PC-9 (cell line): ENCODE measurements at regions of chr15 and their contacts with region 1.

Region 1: DNA sequence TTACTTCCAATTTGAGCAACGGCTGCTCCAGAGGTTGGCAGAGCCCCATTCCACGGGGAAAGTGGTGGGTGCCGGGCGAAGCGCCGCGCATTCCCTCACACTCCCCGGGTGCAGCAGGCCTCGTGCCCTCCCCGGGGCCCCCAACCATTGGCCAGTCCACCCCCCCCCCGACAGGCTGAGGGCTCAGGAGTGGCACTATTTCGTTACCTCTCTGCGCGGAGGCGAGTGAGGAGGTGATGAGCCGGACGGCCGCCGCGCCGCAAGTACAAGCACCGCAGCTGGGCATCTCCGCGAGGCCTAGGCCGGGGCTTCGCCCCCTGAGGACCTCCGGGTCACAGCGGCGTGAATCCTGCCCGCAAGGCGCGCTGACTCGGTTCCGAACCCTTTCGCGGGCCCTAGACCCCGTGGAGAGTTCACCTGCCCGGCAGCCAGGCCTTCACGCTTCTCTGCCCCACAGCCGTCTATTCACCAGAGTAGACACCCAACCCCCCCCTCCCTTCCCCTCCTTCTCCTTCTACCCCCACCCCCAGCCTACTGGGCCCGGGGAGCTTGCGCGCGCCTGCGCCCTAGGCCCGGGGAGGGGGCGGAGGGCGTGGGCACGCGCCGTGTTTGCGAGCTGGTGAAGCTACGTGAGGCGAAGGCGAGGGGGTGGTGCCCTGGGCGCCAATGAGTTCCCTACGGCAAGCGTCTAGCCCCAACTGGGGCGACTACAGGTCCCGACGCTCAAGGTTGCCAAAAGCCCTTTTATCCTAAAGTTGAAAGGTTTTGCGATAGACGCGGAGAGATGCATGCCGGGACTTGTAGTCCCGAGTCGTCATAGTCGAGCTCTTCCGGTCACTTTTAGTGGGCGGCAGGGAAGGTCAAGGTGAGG is at the start of gene CLPX:
- DNase-seq: peak; percentile 85 to 89
- H3K4me3 ChIP-seq: peak within 1 kb of the TSS; percentile 96
- H3K27ac ChIP-seq: peak within 1 kb of the TSS; percentile 69
- H3K4me1 ChIP-seq: no peaks in the 10 kb centered on the region
- H3K27me3 ChIP-seq: no peaks in the 10 kb centered on the region
- CTCF ChIP-seq: no peak
- total RNA-seq, gene CLPX: 41.0 and 44.1 TPM in 2 replicates

Region 2: DNA sequence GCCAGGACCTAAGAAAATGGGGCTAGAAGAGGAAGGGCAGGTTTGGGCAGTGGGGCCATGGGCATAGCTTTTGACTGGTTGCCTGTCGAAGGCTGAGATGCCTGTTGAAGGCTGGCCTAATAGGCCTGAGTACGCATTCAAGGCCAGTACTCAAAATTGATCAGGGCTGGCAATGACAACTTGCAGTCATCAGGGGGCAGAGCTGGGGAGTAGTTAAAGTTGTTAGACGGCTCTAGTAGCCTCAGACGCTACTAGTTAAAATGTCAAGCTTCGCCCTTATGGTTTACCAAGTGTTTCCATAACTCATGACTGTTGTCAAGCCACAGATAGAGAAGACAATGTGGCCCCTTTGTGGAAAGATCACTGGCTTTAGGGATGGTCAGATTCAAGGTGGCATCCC is 224.1 kb before region 1 on chr15:
- CTCF ChIA-PET with region 1: no interaction called
- POLR2A ChIA-PET with region 1: interaction called, 11 read pairs
- intact Hi-C with region 1: no loop called
- DNase-seq: no peak
- H3K4me3 ChIP-seq: no peak overlapping the region
- H3K27ac ChIP-seq: no peak overlapping the region
- H3K4me1 ChIP-seq: no peaks in the 10 kb centered on the region
- H3K27me3 ChIP-seq: no peaks in the 10 kb centered on the region
- CTCF ChIP-seq: no peak

Region 3: GRCh38 chr15:65134538-65134937 is 50.6 kb before region 1 on chr15:
- CTCF ChIA-PET with region 1: no interaction called
- POLR2A ChIA-PET with region 1: interaction called, 10 read pairs
- intact Hi-C with region 1: no loop called
- DNase-seq: no peak
- H3K4me3 ChIP-seq: peak overlapping the region; percentile 78
- H3K27ac ChIP-seq: no peak overlapping the region
- H3K4me1 ChIP-seq: 0 out of 2 replicates have a peak, but pooled peaks cover 5% of the 10 kb centered on the region
- H3K27me3 ChIP-seq: no peaks in the 10 kb centered on the region
- CTCF ChIP-seq: no peak

Region 4: GRCh38 chr15:65258375-65259262 is 73.5 kb after region 1 on chr15:
- CTCF ChIA-PET with region 1: no interaction called
- POLR2A ChIA-PET with region 1: no interaction called
- intact Hi-C with region 1: no loop called
- DNase-seq: no peak
- H3K4me3 ChIP-seq: no peak overlapping the region
- H3K27ac ChIP-seq: no peak overlapping the region
- H3K4me1 ChIP-seq: no peaks in the 10 kb centered on the region
- H3K27me3 ChIP-seq: no peaks in the 10 kb centered on the region
- CTCF ChIP-seq: no peak

Region 5: DNA sequence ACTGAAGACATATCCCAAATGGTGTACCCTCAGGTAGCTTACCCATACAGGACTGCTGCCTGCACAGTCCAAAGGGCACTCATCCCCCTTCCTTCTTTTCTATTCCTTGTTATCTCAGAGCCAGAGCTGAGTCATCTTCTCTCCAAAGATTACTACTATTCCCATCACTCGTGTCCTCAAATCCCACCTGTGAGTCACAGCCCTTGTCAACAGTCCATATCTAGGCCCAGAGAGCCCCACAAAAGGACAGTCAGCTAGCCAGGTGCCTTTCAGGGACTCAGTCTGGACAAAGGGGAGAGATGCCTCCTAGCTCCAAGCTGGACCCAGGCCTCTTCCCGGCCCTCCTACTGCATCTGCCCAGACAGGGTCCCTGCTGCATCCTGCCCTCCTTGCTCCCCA is 90.6 kb after region 1 on chr15:
- CTCF ChIA-PET with region 1: no interaction called
- POLR2A ChIA-PET with region 1: interaction called, 8 read pairs
- intact Hi-C with region 1: loop called (anchors 1 kb)
- DNase-seq: no peak
- H3K4me3 ChIP-seq: no peak overlapping the region
- H3K27ac ChIP-seq: no peak overlapping the region
- H3K4me1 ChIP-seq: no peaks in the 10 kb centered on the region
- H3K27me3 ChIP-seq: no peaks in the 10 kb centered on the region
- CTCF ChIP-seq: no peak

Region 6: DNA sequence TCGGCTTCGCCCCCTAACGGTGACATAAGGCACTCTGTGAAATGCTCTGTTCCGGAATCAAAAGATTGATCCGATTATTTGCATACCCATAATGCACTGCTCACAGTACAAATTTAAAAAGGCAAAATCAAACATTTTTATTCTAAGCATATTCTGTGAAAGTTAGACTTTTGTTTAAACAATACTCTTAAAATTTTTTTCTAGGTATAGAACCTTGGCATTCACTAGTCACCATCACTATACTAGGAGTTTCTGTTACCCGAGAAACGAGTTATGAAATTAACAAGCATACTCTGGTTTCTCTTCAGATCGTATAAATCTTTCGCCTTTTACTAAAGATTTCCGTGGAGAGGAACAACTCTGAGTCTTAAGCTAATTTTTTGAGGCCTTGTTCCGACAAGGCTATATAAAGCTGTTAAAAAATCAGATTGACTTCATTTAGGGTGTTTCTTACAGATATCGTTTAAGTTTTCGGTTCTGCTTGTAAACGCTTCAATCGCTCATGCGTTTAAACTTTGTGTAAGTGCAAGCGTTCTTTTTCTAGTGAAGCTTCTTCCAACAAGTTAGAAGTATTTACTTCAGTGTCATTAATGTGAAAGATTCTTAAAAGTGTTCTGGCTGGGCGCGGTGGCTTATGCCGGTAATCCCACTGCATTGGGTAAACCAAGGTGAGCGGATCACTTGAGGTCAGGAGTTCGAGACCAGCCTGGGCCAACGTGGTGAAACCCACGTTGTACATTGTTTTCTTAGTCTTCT is 119.5 kb after region 1 on chr15 and contains the start of gene RNU5B-1:
- CTCF ChIA-PET with region 1: interaction called, 9 read pairs
- POLR2A ChIA-PET with region 1: interaction called, 32 read pairs
- intact Hi-C with region 1: loop called (anchors 1 kb)
- DNase-seq: peak; percentile 85 to 96
- H3K4me3 ChIP-seq: peak within 1 kb of the TSS; percentile 57
- H3K27ac ChIP-seq: peak within 1 kb of the TSS; percentile 95
- H3K4me1 ChIP-seq: peaks cover 9% of the 10 kb centered on the region; the same call in 1 of the 2 replicates
- H3K27me3 ChIP-seq: no peaks in the 10 kb centered on the region
- CTCF ChIP-seq: no peak; the same call in 1 of the 2 replicates
- total RNA-seq, gene RNU5B-1: not detected in 2 replicates

Region 7: DNA sequence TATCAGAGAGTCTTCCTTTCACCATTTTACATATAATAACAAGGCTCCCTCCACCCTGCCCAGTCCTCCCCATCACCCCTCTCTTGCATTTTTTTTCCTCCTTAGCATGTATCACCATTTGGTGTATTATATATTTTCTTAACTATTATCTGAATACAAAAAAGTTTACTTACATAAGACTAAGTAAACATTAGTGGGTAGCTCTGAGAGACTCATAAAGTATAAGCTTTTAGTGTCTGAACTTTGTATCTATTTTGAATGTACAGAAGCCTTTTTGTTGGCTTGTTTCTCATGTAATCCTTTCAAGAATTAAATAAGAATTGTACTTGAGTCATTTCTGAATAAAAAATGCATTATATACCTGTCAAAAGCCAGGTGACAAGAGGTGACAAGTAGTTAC is 559.4 kb after region 1 on chr15:
- CTCF ChIA-PET with region 1: no interaction called
- POLR2A ChIA-PET with region 1: interaction called, 13 read pairs
- intact Hi-C with region 1: no loop called
- DNase-seq: no peak
- H3K4me3 ChIP-seq: no peak overlapping the region
- H3K27ac ChIP-seq: no peak overlapping the region
- H3K4me1 ChIP-seq: no peaks in the 10 kb centered on the region
- H3K27me3 ChIP-seq: no peaks in the 10 kb centered on the region
- CTCF ChIP-seq: no peak